ENCODE measurements at regions of chr16 and their contacts with region 1.

Region 1: DNA sequence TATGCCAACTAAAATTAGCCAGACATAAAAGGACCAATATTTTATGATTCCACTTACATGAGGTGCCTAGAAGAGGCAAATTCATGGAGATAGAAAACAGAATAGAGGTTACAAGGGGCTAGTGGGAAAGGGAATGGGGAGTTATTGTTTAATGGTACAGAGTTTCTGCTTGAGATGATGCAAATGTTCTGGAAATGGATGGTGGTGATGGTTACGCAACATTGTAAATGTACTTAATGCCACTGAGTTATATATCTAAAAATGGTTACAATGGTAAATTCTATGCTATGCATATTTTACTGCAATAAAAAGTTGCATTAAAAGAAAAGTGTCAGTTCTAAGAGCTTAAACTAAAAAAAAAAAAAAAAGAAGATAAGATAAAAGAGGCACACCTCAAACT is 17.9 kb downstream of the MT1X start:
- DNase-seq: no peak
- ATAC-seq: no peak
- H3K4me3 ChIP-seq: no peak overlapping the region
- H3K27ac ChIP-seq: no peak overlapping the region
- H3K4me1 ChIP-seq: peaks cover 0 to 11% of the 10 kb centered on the region in 2 experiments; a peak in 3 of 4 replicates
- H3K27me3 ChIP-seq: no peaks in the 10 kb centered on the region
- CTCF ChIP-seq: no peak
- POLR2A ChIP-seq: no peak
- RAD21 ChIP-seq: no peak

Region 2: GRCh38 chr16:55711959-55712876 is 988.0 kb before region 1 on chr16:
- CTCF ChIA-PET with region 1: no interaction called
- POLR2A ChIA-PET with region 1: no interaction called
- RAD21 ChIA-PET with region 1: no interaction called
- intact Hi-C with region 1: loop called (anchors 5 kb)
- DNase-seq: peak; percentile 31
- ATAC-seq: peak; percentile 92
- H3K4me3 ChIP-seq: no peak overlapping the region
- H3K27ac ChIP-seq: no peak overlapping the region
- H3K4me1 ChIP-seq: no peaks in the 10 kb centered on the region
- H3K27me3 ChIP-seq: peaks cover 47% of the 10 kb centered on the region
- CTCF ChIP-seq: peak; percentile 47 to 68 (median 54); a peak in 5 of 6 replicates
- POLR2A ChIP-seq: no peak
- RAD21 ChIP-seq: peak; percentile 71

Region 3: GRCh38 chr16:56370877-56371659 is 329.1 kb before region 1 on chr16:
- CTCF ChIA-PET with region 1: no interaction called
- POLR2A ChIA-PET with region 1: no interaction called
- RAD21 ChIA-PET with region 1: no interaction called
- intact Hi-C with region 1: no loop called
- DNase-seq: no peak
- ATAC-seq: no peak
- H3K4me3 ChIP-seq: no peak overlapping the region
- H3K27ac ChIP-seq: no peak overlapping the region
- H3K4me1 ChIP-seq: peaks cover 0 to 14% of the 10 kb centered on the region in 2 experiments; a peak in 1 of 4 replicates
- H3K27me3 ChIP-seq: no peaks in the 10 kb centered on the region
- CTCF ChIP-seq: no peak
- POLR2A ChIP-seq: no peak
- RAD21 ChIP-seq: no peak

Region 4: GRCh38 chr16:56513972-56514371 is 186.2 kb before region 1 on chr16:
- CTCF ChIA-PET with region 1: interaction called, 18 read pairs
- POLR2A ChIA-PET with region 1: no interaction called
- RAD21 ChIA-PET with region 1: interaction called, 3 to 9 read pairs
- intact Hi-C with region 1: loop called (anchors 5 kb)
- DNase-seq: peak; percentile 72
- ATAC-seq: peak; percentile 96
- H3K4me3 ChIP-seq: no peak overlapping the region
- H3K27ac ChIP-seq: no peak overlapping the region
- H3K4me1 ChIP-seq: peaks cover 13 to 14% of the 10 kb centered on the region in 2 experiments
- H3K27me3 ChIP-seq: no peaks in the 10 kb centered on the region
- CTCF ChIP-seq: peak; percentile 76 to 89 (median 83)
- POLR2A ChIP-seq: no peak
- RAD21 ChIP-seq: peak; percentile 80

Region 5: DNA sequence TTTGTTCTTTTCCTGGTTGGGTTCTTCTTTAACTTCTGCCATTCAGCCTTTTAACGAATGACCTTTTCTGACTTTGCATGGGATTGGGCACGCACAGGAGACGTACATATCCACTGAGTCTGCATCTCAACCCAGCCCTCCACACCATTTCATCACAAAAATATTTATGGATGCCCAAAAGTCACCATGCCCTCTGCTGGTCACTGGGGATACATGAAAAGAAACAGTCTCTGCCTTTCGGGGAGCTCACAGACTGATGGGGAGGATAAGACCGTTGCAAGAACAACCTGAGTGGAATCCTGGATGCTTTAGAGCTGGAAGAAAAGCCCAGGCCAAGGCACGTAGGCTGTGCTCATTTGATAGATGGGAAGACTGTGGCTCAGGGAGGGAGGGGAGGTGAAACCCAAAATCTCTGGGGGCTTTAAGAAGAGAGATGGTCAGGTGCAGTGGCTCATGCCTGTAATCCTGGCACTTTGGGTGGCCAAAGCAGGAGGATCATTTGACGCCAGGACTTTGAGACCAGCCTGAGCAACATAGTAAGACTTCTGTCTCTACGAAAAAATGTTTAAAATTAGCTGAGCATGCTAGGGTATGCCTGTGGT is 99.7 kb before region 1 on chr16:
- CTCF ChIA-PET with region 1: interaction called, 65 read pairs
- POLR2A ChIA-PET with region 1: interaction called, 14 read pairs
- RAD21 ChIA-PET with region 1: interaction called, 9 to 13 read pairs
- intact Hi-C with region 1: loop called (anchors 1 kb)
- DNase-seq: peak; percentile 55
- ATAC-seq: peak; percentile 86
- H3K4me3 ChIP-seq: no peak overlapping the region
- H3K27ac ChIP-seq: no peak overlapping the region
- H3K4me1 ChIP-seq: peaks cover 7 to 28% of the 10 kb centered on the region in 2 experiments; a peak in 3 of 4 replicates
- H3K27me3 ChIP-seq: no peaks in the 10 kb centered on the region
- CTCF ChIP-seq: peak in 2 of 3 experiments; percentile 80 to 81; a peak in 4 of 6 replicates
- POLR2A ChIP-seq: no peak
- RAD21 ChIP-seq: no peak

Region 6: DNA sequence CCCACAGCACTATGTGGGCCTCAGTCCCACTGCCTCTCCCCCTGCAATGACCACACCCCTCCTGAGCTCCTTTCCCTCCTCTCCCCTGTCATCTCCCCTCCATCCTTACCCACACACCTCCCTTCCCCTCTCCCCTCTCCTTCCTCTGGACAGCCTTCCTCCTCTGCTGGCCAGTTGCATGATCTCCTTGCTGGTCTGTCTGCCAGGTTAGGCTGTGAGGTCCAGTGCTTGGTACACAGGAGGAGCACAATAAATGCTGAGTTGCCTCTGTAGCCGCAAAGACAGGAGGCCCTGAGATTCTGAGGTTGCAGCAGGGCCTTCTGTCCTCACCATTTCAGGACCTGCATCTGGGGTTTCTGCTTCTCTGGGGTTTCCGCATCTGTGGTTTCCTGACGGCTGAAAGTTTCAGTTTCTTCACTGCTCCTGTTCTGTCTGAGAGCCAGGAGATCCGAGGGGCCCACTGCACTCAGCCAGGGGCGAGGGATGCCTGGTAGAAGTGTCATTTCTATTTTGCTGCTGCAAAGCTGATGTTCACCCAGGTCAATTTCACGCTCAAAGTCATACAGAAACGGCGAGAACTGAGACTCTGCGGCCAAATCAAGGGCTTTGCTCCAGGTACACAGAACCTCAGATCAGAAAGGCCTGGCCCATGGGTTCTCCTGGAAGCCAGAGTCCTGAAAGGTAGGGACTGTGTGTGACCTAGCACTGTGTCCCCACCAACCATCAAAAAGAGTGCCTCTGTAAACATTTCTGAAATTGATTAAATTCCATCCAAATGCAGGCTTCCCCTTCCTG is 160.2 kb after region 1 on chr16:
- CTCF ChIA-PET with region 1: no interaction called
- POLR2A ChIA-PET with region 1: no interaction called
- RAD21 ChIA-PET with region 1: no interaction called
- intact Hi-C with region 1: no loop called
- DNase-seq: no peak
- ATAC-seq: no peak
- H3K4me3 ChIP-seq: no peak overlapping the region
- H3K27ac ChIP-seq: no peak overlapping the region
- H3K4me1 ChIP-seq: peaks cover 6 to 12% of the 10 kb centered on the region in 2 experiments; a peak in 3 of 4 replicates
- H3K27me3 ChIP-seq: no peaks in the 10 kb centered on the region
- CTCF ChIP-seq: no peak
- POLR2A ChIP-seq: no peak
- RAD21 ChIP-seq: no peak

Measured in HCT116 (cell line).